Astrocyte of the cerebellum (primary cell): ENCODE measurements at regions of chr3 and their contacts with region 1.

Region 1: GRCh38 chr3:184368580-184369183 is 7.2 kb downstream of the POLR2H start:
- DNase-seq: peak; percentile 85
- H3K4me3 ChIP-seq: no peak overlapping the region
- CTCF ChIP-seq: no peak

Region 2: DNA sequence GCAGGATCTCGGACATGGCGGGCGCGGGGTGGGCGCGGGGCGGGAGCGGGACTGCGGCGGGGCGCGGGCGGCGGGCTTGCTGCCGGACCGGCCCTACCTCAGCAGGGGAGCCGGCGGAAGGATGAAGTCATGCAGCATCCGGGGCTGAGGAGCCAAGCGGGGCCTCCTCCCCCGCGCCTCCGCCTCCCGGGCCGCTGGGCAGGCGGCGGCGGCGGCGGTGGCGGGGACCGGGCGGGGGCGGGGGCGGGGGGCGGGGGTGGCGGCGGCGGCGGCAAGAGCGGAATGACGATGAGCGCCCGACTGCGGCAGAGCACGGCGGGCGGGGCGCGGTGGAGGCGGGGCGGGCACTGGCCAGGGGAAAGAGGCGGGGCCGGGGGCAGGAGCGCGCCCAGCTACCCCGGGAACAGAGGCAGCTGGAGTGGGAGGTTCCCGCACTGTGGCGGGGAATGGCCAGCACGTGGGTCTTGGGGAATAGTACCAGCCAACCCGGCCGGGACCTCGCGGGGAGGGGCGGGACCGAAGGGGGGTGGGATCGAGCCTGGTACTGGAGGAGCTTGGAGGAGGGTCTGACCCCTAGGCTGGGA is 107.3 kb before region 1 on chr3 and contains the start of gene CAMK2N2:
- in situ Hi-C with region 1: loop called (anchors 5 kb)
- DNase-seq: no peak
- H3K4me3 ChIP-seq: peak within 1 kb of the TSS; percentile 38
- CTCF ChIP-seq: no peak